MCF 10A (cell line): ENCODE measurements at regions of chr17 and their contacts with region 1.

Region 1: GRCh38 chr17:7897773-7898172 is 9.2 kb downstream of the CHD3 start:
- DNase-seq: peak; percentile 51
- H3K4me3 Mint-ChIP-seq: no peak overlapping the region
- H3K27ac Mint-ChIP-seq: no peak overlapping the region
- H3K4me1 Mint-ChIP-seq: peaks cover 4% of the 10 kb centered on the region
- H3K27me3 Mint-ChIP-seq: no peaks in the 10 kb centered on the region
- CTCF ChIP-seq: peak; percentile 51

Region 2: DNA sequence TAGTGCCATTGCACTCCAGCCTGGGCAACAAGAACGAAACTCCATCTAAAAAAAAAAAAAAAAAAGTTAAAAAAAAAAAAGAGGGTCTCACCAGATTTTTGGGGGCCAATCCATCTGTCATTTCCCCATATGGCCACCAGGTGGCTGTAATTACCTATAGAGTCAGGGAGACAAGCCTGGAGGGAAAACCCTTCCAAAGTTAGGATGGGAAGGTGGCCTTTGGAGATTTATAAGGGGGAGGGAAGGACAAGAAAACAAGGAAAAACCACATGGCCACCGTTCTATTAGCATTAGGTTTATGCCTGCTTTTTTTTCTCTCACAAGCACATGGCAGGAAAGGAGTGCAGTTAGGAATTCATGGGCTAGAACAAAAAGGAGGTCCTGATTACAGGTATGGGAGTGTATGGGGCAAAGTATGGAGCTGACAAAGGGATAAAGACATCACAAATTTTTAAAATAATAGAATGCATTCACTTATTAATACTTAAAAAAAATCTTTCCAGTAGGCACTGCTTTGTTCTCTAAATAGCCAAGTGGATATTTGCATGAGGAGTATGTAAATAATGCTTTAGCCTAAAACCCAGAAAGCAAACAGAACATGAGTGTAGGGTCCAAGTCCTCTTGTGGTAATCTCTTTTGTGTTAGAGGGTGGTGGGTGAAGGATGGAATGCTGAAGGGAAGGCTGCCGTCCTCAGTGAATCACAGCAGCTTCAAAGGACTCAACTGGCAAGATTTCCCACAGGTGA is 34.9 kb before region 1 on chr17:
- CTCF ChIA-PET with region 1: interaction called, 60 read pairs
- POLR2A ChIA-PET with region 1: no interaction called
- intact Hi-C with region 1: loop called (anchors 1 kb)
- DNase-seq: peak; percentile 62
- H3K4me3 Mint-ChIP-seq: no peak overlapping the region
- H3K27ac Mint-ChIP-seq: no peak overlapping the region
- H3K4me1 Mint-ChIP-seq: peaks cover 11% of the 10 kb centered on the region
- H3K27me3 Mint-ChIP-seq: no peaks in the 10 kb centered on the region
- CTCF ChIP-seq: peak; percentile 75

Region 3: DNA sequence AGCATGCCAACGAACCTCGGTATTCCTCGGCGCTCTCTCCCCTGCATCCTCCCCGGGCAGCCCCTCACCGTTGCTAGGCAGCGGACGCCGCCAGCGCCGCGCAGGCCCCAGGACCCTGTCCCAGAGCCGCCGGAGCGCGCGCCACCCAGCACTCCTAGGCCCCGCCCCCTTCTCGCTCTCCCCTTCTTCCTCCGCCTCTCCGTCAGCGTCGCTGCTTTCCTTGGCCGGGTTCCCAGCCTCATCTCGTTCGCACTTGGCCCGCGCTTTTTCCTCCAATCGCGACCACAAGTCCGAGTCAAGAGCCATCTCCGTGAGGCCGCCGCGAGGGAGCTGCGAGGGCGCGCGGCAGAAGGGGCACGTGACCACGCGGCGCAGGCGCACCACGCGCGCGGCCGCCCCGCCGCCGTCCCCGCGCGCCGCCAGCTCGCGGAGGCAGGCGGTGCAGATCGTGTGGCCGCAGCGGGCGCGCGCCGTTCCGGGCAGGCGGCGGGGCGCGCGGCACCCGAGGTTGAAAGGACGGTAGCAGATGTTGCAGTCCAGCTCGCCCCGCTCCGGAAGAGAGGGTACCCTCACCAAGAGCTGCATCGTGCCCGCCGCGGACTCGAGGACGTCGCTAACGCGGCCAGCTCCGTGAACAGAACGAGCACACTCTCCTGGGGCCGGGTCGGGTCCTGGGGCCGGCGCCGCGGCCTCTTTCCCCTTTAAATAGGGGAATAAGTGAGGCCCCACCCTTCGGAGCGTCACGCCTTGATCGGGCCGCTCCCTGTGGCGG is 18.0 kb after region 1 on chr17 and contains the start of gene RNF227:
- CTCF ChIA-PET with region 1: interaction called, 16 read pairs
- POLR2A ChIA-PET with region 1: interaction called, 4 read pairs
- intact Hi-C with region 1: no loop called
- DNase-seq: peak; percentile 97
- H3K4me3 Mint-ChIP-seq: peak within 1 kb of the TSS; percentile 93
- H3K27ac Mint-ChIP-seq: peak within 1 kb of the TSS; percentile 95
- H3K4me1 Mint-ChIP-seq: peaks cover 26% of the 10 kb centered on the region
- H3K27me3 Mint-ChIP-seq: no peaks in the 10 kb centered on the region
- CTCF ChIP-seq: no peak
- total RNA-seq, gene RNF227: 5.6 and 7.4 TPM in 2 replicates